Aorta (tissue), 5 donors: ENCODE measurements at regions of chr4 and their contacts with region 1.

Region 1: DNA sequence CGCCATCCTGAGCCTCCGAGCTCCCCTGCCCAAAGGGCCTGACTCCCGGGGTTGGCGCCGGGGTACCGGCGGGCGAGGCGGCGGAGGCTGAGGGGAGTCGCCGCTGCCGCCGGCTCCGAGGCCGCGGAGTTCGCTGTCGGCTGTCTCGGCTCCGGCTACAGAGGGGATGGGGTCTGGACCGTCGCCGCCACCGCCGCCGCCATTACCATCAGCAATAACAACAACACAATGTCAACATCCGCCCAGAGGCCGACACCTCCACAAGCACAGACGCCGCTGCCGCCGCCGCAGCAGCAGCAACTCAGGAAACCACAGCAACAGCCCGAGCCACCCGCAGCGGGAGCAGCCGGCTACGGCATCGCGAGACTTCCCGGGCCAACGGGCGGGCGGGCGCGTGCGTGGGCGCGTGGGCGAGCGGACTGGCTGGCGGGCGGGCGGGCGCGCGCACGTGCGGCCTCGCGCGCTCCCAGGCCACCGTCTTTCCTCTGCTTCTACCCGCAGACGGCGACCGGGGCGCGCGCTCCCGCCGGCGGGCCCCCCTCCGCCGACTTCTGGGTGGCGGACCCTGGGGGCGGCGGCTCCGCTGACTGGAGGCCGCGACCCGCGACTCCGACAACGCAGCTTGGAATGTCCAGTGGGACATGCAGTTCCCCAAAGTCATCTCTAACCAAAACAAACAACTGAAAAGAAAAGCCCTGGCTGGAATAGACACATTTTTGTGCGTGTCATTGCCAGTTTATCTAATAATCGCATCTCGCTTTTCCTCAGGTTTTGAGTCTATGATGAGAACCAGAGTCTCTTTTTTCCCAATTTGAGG is at the start of gene CHIC2:
- DNase-seq: peak; percentile 98 to 99
- ATAC-seq: peak; percentile 96
- H3K4me3 ChIP-seq: peak within 1 kb of the TSS; percentile 58 to 85
- H3K27ac ChIP-seq: peak within 1 kb of the TSS; percentile 72 to 98
- H3K4me1 ChIP-seq: no peaks in the 10 kb centered on the region
- H3K27me3 ChIP-seq: no peaks in the 10 kb centered on the region
- total RNA-seq, gene CHIC2: 31.8 to 31.9 TPM

Region 2: DNA sequence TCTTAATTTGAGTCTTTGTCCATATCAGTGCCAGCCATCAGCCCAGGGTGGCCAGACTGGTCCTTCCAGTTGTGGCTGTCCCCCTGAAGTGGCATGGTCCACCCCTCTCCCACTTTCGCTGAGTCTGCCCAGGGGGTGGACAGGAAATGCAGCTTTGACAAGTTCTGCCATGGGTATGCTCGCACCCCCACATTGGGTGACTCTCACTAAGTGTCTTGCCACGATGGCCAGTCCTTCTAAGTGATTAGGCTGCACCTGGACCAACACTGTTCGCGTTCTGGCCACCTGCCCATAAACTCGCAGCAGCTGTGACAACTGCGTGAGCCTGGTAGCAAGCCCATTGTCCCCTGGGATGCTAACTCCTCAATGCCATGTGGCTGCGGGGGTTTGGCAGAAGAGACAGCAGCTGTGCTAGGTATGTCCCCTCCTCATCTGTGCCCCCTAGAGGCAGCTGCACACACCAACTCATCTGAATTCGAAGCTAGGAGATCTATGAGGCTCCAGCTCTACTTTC is 463.2 kb before region 1 on chr4:
- intact Hi-C with region 1: no loop called
- DNase-seq: no peak
- ATAC-seq: peak; percentile 52
- H3K4me3 ChIP-seq: no peak overlapping the region
- H3K27ac ChIP-seq: no peak overlapping the region
- H3K4me1 ChIP-seq: peaks cover 0 to 1% of the 10 kb centered on the region in 2 donors
- H3K27me3 ChIP-seq: no peaks in the 10 kb centered on the region

Region 3: DNA sequence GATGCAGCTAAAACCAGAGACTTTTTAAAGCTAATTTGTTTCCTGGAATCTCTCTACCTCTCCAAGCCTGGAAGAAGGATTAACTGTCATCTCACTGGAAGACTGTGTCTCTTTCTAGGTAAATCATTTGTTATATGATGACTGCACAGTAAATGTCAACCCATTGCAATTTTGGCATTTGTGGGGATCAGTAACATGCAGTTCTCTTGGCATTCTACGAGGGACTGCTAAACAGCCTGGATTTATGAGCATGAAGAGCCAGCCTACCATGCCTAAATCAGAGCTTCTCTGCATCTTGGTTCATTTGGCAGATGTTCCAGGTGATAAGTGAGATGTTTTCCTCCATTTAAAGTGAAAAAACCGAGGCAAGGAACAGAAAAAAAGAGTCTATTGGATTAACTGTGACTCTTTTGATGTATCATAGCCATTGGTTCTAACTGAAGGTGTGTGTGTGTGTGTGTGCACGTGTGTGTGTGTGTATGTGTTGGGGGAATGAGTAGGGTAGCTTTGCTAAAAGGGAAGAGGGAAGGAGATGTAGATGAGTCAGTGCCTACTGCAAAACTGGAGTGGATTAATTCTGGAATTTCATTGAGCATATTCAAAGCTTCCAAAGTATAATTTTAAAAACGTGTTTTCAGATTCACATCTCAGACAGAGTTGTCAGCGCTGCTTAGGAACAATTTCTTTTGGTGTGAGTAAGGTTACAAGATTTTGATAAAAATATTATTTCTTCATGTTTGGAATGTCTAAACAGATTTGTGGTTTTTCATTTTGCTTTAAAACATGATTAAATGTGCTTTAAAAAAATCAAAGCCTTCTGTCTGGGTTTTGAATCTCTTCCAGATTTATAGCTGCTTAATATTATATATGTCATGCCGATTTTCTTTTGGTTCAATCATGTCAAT is 350.0 kb before region 1 on chr4:
- intact Hi-C with region 1: loop called in 1 of 2 experiments (anchors 10 kb)
- DNase-seq: no peak
- ATAC-seq: no peak
- H3K4me3 ChIP-seq: no peak overlapping the region
- H3K27ac ChIP-seq: peak overlapping the region in 1 of 2 donors; percentile 71
- H3K4me1 ChIP-seq: peaks cover 3 to 7% of the 10 kb centered on the region in 2 donors
- H3K27me3 ChIP-seq: no peaks in the 10 kb centered on the region

Region 4: GRCh38 chr4:53830511-53830910 is 234.0 kb before region 1 on chr4:
- intact Hi-C with region 1: no loop called
- DNase-seq: no peak
- ATAC-seq: no peak
- H3K4me3 ChIP-seq: no peak overlapping the region
- H3K27ac ChIP-seq: no peak overlapping the region
- H3K4me1 ChIP-seq: no peaks in the 10 kb centered on the region
- H3K27me3 ChIP-seq: no peaks in the 10 kb centered on the region

Region 5: GRCh38 chr4:54165438-54165837 is 100.9 kb after region 1 on chr4:
- intact Hi-C with region 1: loop called in 1 of 2 experiments (anchors 10 kb)
- DNase-seq: no peak
- ATAC-seq: peak; percentile 66
- H3K4me3 ChIP-seq: no peak overlapping the region
- H3K27ac ChIP-seq: no peak overlapping the region
- H3K4me1 ChIP-seq: no peaks in the 10 kb centered on the region
- H3K27me3 ChIP-seq: no peaks in the 10 kb centered on the region

Region 6: GRCh38 chr4:54228056-54228527 is 163.6 kb after region 1 on chr4:
- intact Hi-C with region 1: loop called (anchors 10 kb)
- DNase-seq: peak; percentile 84 to 93
- ATAC-seq: peak; percentile 75
- H3K4me3 ChIP-seq: peak overlapping the region; percentile 59 to 78
- H3K27ac ChIP-seq: peak overlapping the region in 1 of 2 donors; percentile 65
- H3K4me1 ChIP-seq: no peaks in the 10 kb centered on the region
- H3K27me3 ChIP-seq: no peaks in the 10 kb centered on the region